ENCODE measurements at regions of chr19 and their contacts with region 1.

Region 1: GRCh38 chr19:6516659-6517291 is 14.1 kb upstream of the TNFSF9 start:
- DNase-seq: peak; percentile 80 to 97 (median 91)
- ATAC-seq: peak; percentile 85
- H3K4me3 ChIP-seq: peak overlapping the region; percentile 78
- H3K4me3 Mint-ChIP-seq: peak overlapping the region; percentile 90
- H3K27ac ChIP-seq: peak overlapping the region in 1 of 2 experiments; percentile 52
- H3K27ac Mint-ChIP-seq: peak overlapping the region; percentile 33
- H3K4me1 ChIP-seq: peaks cover 26% of the 10 kb centered on the region
- H3K4me1 Mint-ChIP-seq: peaks cover 31% of the 10 kb centered on the region
- H3K27me3 ChIP-seq: no peaks in the 10 kb centered on the region
- H3K27me3 Mint-ChIP-seq: no peaks in the 10 kb centered on the region
- CTCF ChIP-seq: peak; percentile 85

Region 2: GRCh38 chr19:6501740-6502648 is 14.8 kb before region 1 on chr19 and contains the start of gene TUBB4A:
- CTCF ChIA-PET with region 1: interaction called, 16 read pairs
- POLR2A ChIA-PET with region 1: no interaction called
- intact Hi-C with region 1: no loop called
- DNase-seq: peak in 8 of 9 experiments; percentile 18 to 73 (median 46)
- ATAC-seq: peak; percentile 52
- H3K4me3 ChIP-seq: peak within 1 kb of the TSS; percentile 48 to 56
- H3K4me3 Mint-ChIP-seq: peak within 1 kb of the TSS; percentile 85
- H3K27ac ChIP-seq: no peak within 1 kb of the TSS
- H3K27ac Mint-ChIP-seq: no peak within 1 kb of the TSS
- H3K4me1 ChIP-seq: peaks cover 4% of the 10 kb centered on the region
- H3K4me1 Mint-ChIP-seq: peaks cover 27% of the 10 kb centered on the region
- H3K27me3 ChIP-seq: peaks cover 0 to 3% of the 10 kb centered on the region in 2 experiments
- H3K27me3 Mint-ChIP-seq: no peaks in the 10 kb centered on the region
- CTCF ChIP-seq: no peak
- total RNA-seq, gene TUBB4A: 1.4 to 1.6 TPM

Region 3: GRCh38 chr19:6551607-6552450 is 35.1 kb after region 1 on chr19:
- CTCF ChIA-PET with region 1: interaction called, 11 read pairs
- POLR2A ChIA-PET with region 1: no interaction called
- intact Hi-C with region 1: loop called (anchors 1 to 5 kb)
- DNase-seq: peak; percentile 33 to 89 (median 71)
- ATAC-seq: peak; percentile 99
- H3K4me3 ChIP-seq: peak overlapping the region; percentile 31 to 35
- H3K4me3 Mint-ChIP-seq: peak overlapping the region; percentile 11
- H3K27ac ChIP-seq: peak overlapping the region in 1 of 2 experiments; percentile 28
- H3K27ac Mint-ChIP-seq: peak overlapping the region; percentile 41
- H3K4me1 ChIP-seq: peaks cover 17% of the 10 kb centered on the region
- H3K4me1 Mint-ChIP-seq: peaks cover 10% of the 10 kb centered on the region
- H3K27me3 ChIP-seq: no peaks in the 10 kb centered on the region
- H3K27me3 Mint-ChIP-seq: no peaks in the 10 kb centered on the region
- CTCF ChIP-seq: peak; percentile 48

Region 4: GRCh38 chr19:6632002-6632621 is 115.3 kb after region 1 on chr19:
- CTCF ChIA-PET with region 1: interaction called, 23 read pairs
- POLR2A ChIA-PET with region 1: no interaction called
- intact Hi-C with region 1: loop called (anchors 1 to 2 kb)
- DNase-seq: peak; percentile 52 to 90 (median 84)
- ATAC-seq: peak; percentile 96
- H3K4me3 ChIP-seq: no peak overlapping the region
- H3K4me3 Mint-ChIP-seq: no peak overlapping the region
- H3K27ac ChIP-seq: no peak overlapping the region
- H3K27ac Mint-ChIP-seq: no peak overlapping the region
- H3K4me1 ChIP-seq: no peaks in the 10 kb centered on the region
- H3K4me1 Mint-ChIP-seq: peaks cover 12% of the 10 kb centered on the region
- H3K27me3 ChIP-seq: no peaks in the 10 kb centered on the region
- H3K27me3 Mint-ChIP-seq: peaks cover 3% of the 10 kb centered on the region
- CTCF ChIP-seq: peak; percentile 85

Region 5: DNA sequence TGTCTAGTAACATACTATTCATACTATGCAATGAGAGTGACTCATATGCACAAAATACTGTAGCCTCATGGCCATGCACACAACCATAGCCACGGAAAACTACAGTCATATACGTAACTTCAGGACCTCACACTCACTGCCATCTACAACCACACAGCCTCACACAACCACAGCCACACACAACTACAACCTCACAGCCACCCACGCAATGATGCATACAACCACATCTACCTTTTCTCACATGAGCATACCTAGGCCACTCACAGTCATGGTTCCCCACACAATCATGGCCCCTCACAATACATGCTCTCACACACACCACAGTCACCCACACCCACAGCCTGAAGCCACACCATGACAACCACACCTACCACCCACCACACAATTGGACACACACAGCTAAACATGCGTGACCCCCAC is 161.9 kb after region 1 on chr19:
- CTCF ChIA-PET with region 1: no interaction called
- POLR2A ChIA-PET with region 1: no interaction called
- intact Hi-C with region 1: no loop called
- DNase-seq: no peak
- ATAC-seq: peak; percentile 14
- H3K4me3 ChIP-seq: no peak overlapping the region
- H3K4me3 Mint-ChIP-seq: no peak overlapping the region
- H3K27ac ChIP-seq: no peak overlapping the region
- H3K27ac Mint-ChIP-seq: no peak overlapping the region
- H3K4me1 ChIP-seq: peaks cover 21% of the 10 kb centered on the region
- H3K4me1 Mint-ChIP-seq: peaks cover 28% of the 10 kb centered on the region
- H3K27me3 ChIP-seq: no peaks in the 10 kb centered on the region
- H3K27me3 Mint-ChIP-seq: no peaks in the 10 kb centered on the region
- CTCF ChIP-seq: no peak